Activated naive CD4-positive, alpha-beta T cell treated with anti-CD3 and anti-CD28 coated beads for 36 hours (primary cell): ENCODE measurements at regions of chr2 and their contacts with region 1.

Region 1: DNA sequence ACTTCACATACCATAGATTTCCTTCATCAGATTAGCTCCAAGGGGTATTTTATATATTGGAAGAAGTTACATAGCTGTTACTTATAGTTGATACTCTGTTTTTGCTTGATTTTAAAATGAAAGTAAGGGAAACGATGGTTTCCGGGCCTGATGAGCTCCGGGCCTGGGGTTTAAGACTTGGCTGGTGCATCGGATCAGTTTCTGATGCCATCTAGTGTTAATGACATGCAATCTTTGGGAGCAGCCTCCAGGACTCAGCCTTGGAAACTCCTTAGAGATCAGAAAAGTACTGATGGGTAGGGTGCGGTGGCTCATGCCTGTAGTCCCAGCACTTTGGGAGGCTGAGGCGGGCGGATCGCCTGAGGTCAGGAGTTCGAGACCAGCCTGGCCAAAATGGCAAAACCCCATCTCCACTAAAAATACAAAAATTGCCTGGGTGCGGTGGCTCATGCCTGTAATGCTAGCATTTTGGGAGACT is 47.1 kb upstream of the CNOT11 start:
- DNase-seq: peak; percentile 76
- H3K4me3 Mint-ChIP-seq: peak overlapping the region; percentile 45
- H3K27ac Mint-ChIP-seq: peak overlapping the region; percentile 65
- H3K4me1 Mint-ChIP-seq: no peaks in the 10 kb centered on the region
- H3K27me3 Mint-ChIP-seq: no peaks in the 10 kb centered on the region

Region 2: GRCh38 chr2:100610381-100610831 is 595.2 kb before region 1 on chr2:
- CTCF ChIA-PET with region 1: interaction called, 10 read pairs
- intact Hi-C with region 1: loop called (anchors 1 kb)
- DNase-seq: peak; percentile 89
- H3K4me3 Mint-ChIP-seq: no peak overlapping the region
- H3K27ac Mint-ChIP-seq: no peak overlapping the region
- H3K4me1 Mint-ChIP-seq: peaks cover 4% of the 10 kb centered on the region
- H3K27me3 Mint-ChIP-seq: no peaks in the 10 kb centered on the region

Region 3: GRCh38 chr2:101012706-101013181 is 192.8 kb before region 1 on chr2:
- CTCF ChIA-PET with region 1: interaction called, 29 read pairs
- intact Hi-C with region 1: loop called (anchors 1 kb)
- DNase-seq: peak; percentile 44
- H3K4me3 Mint-ChIP-seq: no peak overlapping the region
- H3K27ac Mint-ChIP-seq: no peak overlapping the region
- H3K4me1 Mint-ChIP-seq: peaks cover 35% of the 10 kb centered on the region
- H3K27me3 Mint-ChIP-seq: no peaks in the 10 kb centered on the region

Region 4: DNA sequence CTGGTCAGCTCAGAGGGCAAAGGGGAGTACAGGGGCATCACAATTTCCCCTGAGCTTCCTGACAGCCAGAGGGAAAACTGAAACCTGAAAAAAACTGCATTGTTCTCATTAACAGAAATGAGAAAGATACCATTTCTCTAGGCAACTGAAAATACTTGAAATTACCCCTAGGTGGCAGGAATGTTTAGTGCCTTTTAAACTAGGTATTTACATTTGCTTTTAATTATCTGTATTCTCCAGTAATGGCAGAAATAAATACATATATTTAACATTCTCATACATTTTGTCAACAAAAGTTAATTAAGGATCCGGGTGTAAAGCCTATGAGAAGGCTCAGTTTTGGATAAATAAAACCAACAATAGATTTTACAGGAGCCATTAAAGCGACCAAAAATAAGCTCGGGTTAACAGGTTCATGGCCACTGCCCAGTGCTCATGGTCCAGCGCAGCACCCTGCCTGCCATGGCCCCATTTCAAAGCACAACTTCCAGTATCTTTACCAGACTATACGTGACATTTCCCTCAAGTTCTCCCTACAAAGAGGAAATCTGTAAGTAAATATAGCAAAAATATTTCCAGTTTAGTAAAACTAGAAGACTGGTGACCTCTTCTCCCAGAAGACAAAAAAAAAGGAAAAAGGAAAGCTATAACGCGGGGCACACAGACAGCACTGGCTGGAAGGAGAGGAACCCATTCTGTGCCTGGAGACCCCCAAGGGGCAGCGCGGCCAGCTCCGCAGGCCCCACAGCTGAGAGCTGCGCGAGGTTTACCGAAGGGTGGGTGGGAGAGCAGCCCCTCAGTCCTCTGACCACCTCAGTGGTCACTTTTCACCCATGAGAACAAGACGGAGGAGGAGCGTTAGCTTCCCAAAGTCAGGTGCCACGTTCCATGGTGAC is 168.8 kb before region 1 on chr2:
- CTCF ChIA-PET with region 1: interaction called, 52 read pairs
- intact Hi-C with region 1: loop called (anchors 1 kb)
- DNase-seq: no peak
- H3K4me3 Mint-ChIP-seq: no peak overlapping the region
- H3K27ac Mint-ChIP-seq: no peak overlapping the region
- H3K4me1 Mint-ChIP-seq: no peaks in the 10 kb centered on the region
- H3K27me3 Mint-ChIP-seq: no peaks in the 10 kb centered on the region

Region 5: DNA sequence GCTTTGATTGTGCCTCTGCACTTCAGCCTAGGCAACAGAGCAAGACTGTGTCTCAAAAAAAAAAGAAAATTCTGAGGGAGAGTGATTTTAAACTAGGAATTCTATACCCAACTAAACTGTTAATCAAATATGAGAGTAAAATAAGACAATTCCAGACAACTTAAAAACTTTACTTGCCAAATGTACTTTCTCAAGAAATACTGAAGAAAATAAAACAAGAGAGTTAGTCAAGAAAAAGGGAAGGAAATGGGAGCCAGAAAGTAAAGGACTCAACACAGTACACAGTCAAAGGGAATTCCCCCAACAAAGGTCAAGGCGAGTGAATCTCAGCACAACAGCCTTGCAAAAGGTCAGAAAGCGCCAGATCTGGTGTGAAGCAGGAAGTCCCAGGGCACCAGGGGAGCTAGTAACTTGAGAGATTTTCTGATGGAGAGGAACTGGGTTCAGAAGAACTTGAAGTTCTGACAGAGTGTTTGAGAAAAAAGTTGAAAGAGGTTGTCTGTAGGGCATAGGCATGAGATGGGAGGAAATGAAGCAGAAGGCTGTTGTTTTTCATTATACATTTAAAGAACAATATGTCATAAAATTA is 31.8 kb before region 1 on chr2:
- CTCF ChIA-PET with region 1: interaction called, 9 read pairs
- intact Hi-C with region 1: loop called (anchors 1 kb)
- DNase-seq: peak; percentile 82
- H3K4me3 Mint-ChIP-seq: no peak overlapping the region
- H3K27ac Mint-ChIP-seq: peak overlapping the region; percentile 87
- H3K4me1 Mint-ChIP-seq: peaks cover 21% of the 10 kb centered on the region
- H3K27me3 Mint-ChIP-seq: no peaks in the 10 kb centered on the region

Region 6: GRCh38 chr2:101252408-101253012 is 47.0 kb after region 1 on chr2 and contains the start of gene CNOT11:
- CTCF ChIA-PET with region 1: interaction called, 18 read pairs
- intact Hi-C with region 1: no loop called
- DNase-seq: peak; percentile 99
- H3K4me3 Mint-ChIP-seq: peak within 1 kb of the TSS; percentile 98
- H3K27ac Mint-ChIP-seq: peak within 1 kb of the TSS; percentile 93
- H3K4me1 Mint-ChIP-seq: peaks cover 39% of the 10 kb centered on the region
- H3K27me3 Mint-ChIP-seq: no peaks in the 10 kb centered on the region
- total RNA-seq, gene CNOT11: 38.3 to 40.3 TPM

Region 7: DNA sequence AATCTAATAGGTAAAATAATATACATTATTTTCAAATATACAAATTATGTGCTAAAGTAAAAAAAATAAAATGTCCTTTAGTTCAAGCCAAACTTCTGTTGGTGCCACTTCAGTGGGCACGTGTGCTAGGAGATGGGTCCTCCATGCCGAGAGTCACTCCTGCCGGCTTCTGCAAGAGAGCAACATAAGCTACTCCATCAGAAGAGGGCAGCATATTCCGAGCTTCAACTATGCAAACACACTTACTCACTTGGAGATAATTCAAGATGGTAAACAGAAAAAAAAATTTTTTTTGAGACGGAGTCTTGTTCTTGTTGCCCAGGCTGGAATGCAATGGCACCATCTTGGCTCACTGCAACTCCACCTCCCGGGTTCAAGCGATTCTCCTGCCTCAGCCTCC is 71.6 kb after region 1 on chr2:
- CTCF ChIA-PET with region 1: no interaction called
- intact Hi-C with region 1: no loop called
- DNase-seq: no peak
- H3K4me3 Mint-ChIP-seq: no peak overlapping the region
- H3K27ac Mint-ChIP-seq: no peak overlapping the region
- H3K4me1 Mint-ChIP-seq: peaks cover 26% of the 10 kb centered on the region
- H3K27me3 Mint-ChIP-seq: no peaks in the 10 kb centered on the region